ENCODE measurements at regions of chr2 and their contacts with region 1.

Region 1: GRCh38 chr2:26745609-26746327 is 18.3 kb upstream of the SLC35F6 start:
- DNase-seq: no peak
- H3K4me3 ChIP-seq: no peak overlapping the region
- CTCF ChIP-seq: peak; percentile 93

Region 2: GRCh38 chr2:26503231-26503880 is 242.4 kb before region 1 on chr2:
- CTCF ChIA-PET with region 1: interaction called, 10 read pairs
- POLR2A ChIA-PET with region 1: no interaction called
- DNase-seq: no peak
- H3K4me3 ChIP-seq: no peak overlapping the region
- CTCF ChIP-seq: peak; percentile 67

Region 3: GRCh38 chr2:26591619-26592505 is 153.9 kb before region 1 on chr2:
- CTCF ChIA-PET with region 1: interaction called, 38 read pairs
- POLR2A ChIA-PET with region 1: no interaction called
- DNase-seq: no peak
- H3K4me3 ChIP-seq: no peak overlapping the region
- CTCF ChIP-seq: no peak

Region 4: DNA sequence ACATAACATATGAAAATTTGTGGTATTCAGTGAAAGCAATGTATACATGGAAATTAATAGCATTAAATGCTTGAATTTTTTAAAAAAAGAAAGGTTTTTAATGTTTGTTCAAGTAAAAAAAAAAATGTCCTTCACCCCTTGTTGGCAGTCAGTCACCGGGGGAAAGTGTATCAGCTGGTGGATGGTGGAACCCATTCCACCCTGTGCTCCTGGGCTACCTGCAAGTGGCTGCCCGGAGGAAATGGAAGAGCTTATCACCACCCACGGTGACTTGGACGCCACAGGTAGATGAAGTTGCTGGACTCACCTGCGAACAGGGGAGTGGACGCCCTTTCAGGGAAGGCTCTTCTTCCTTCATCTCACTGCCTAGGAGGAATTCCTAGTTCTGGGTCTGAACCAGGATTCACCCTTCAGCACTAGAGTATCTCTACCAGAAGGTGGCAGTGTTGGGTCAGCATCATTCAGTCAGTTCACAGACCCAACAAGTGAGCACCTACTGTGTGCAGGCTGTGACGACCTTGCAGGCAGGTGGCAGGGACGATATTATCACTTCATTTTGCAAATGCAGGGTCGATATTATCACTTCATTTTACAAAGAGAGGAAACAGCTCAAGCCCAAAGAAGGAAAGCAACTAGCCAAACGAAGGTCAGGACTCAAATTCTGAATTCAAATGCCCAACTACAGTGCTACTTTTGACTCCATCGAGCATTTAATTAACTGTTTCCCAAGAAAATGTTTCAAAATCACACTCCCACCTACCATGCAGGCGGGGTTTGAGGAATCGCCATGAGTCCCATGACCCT is 140.4 kb before region 1 on chr2:
- CTCF ChIA-PET with region 1: interaction called, 698 read pairs
- POLR2A ChIA-PET with region 1: interaction called, 4 read pairs
- DNase-seq: no peak
- H3K4me3 ChIP-seq: no peak overlapping the region
- CTCF ChIP-seq: peak; percentile 69

Region 5: DNA sequence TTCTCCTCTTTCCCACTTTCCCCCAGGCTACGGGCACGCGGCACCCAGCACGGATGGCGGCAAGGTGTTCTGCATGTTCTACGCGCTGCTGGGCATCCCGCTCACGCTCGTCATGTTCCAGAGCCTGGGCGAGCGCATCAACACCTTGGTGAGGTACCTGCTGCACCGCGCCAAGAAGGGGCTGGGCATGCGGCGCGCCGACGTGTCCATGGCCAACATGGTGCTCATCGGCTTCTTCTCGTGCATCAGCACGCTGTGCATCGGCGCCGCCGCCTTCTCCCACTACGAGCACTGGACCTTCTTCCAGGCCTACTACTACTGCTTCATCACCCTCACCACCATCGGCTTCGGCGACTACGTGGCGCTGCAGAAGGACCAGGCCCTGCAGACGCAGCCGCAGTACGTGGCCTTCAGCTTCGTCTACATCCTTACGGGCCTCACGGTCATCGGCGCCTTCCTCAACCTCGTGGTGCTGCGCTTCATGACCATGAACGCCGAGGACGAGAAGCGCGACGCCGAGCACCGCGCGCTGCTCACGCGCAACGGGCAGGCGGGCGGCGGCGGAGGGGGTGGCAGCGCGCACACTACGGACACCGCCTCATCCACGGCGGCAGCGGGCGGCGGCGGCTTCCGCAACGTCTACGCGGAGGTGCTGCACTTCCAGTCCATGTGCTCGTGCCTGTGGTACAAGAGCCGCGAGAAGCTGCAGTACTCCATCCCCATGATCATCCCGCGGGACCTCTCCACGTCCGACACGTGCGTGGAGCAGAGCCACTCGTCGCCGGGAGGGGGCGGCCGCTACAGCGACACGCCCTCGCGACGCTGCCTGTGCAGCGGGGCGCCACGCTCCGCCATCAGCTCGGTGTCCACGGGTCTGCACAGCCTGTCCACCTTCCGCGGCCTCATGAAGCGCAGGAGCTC is 17.9 kb before region 1 on chr2:
- CTCF ChIA-PET with region 1: interaction called, 76 read pairs
- POLR2A ChIA-PET with region 1: no interaction called
- DNase-seq: no peak
- H3K4me3 ChIP-seq: peak overlapping the region; percentile 29
- CTCF ChIP-seq: peak; percentile 52

Region 6: GRCh38 chr2:26757873-26758789 is 12.4 kb after region 1 on chr2:
- CTCF ChIA-PET with region 1: interaction called, 43 read pairs
- POLR2A ChIA-PET with region 1: no interaction called
- DNase-seq: peak; percentile 96
- H3K4me3 ChIP-seq: no peak overlapping the region; the same call in 1 of the 2 replicates
- CTCF ChIP-seq: no peak

Measured in AG04449 (cell line).